ENCODE measurements at regions of chr21 and their contacts with region 1.

Region 1: GRCh38 chr21:36113647-36114428 is 21.0 kb upstream of the CBR3 start:
- DNase-seq: peak in 1 of 2 donors; percentile 87
- ATAC-seq: peak in 2 of 3 donors; percentile 41 to 56
- H3K4me3 ChIP-seq: peak overlapping the region; percentile 12
- H3K4me3 Mint-ChIP-seq: peak overlapping the region; percentile 88
- H3K27ac ChIP-seq: no peak overlapping the region
- H3K27ac Mint-ChIP-seq: peak overlapping the region; percentile 60 to 66
- H3K4me1 ChIP-seq: peaks cover 28% of the 10 kb centered on the region
- H3K4me1 Mint-ChIP-seq: peaks cover 18 to 20% of the 10 kb centered on the region in 2 donors
- H3K27me3 ChIP-seq: no peaks in the 10 kb centered on the region
- H3K27me3 Mint-ChIP-seq: peaks cover 7 to 20% of the 10 kb centered on the region in 2 donors
- CTCF ChIP-seq: no peak

Region 2: GRCh38 chr21:36060159-36060921 is 53.5 kb before region 1 on chr21 and contains the start of gene SETD4:
- intact Hi-C with region 1: loop called (anchors 1 kb)
- DNase-seq: peak; percentile 91 to 95
- ATAC-seq: peak; percentile 85 to 92 (median 87)
- H3K4me3 ChIP-seq: peak within 1 kb of the TSS; percentile 85
- H3K4me3 Mint-ChIP-seq: peak within 1 kb of the TSS; percentile 96
- H3K27ac ChIP-seq: peak within 1 kb of the TSS; percentile 72
- H3K27ac Mint-ChIP-seq: peak within 1 kb of the TSS; percentile 93 to 94
- H3K4me1 ChIP-seq: peaks cover 15% of the 10 kb centered on the region
- H3K4me1 Mint-ChIP-seq: peaks cover 9 to 24% of the 10 kb centered on the region in 2 donors
- H3K27me3 ChIP-seq: no peaks in the 10 kb centered on the region
- H3K27me3 Mint-ChIP-seq: peaks cover 0 to 4% of the 10 kb centered on the region in 2 donors
- CTCF ChIP-seq: no peak
- total RNA-seq, gene SETD4: 19.1 to 29.3 (median 22.5) TPM

Region 3: DNA sequence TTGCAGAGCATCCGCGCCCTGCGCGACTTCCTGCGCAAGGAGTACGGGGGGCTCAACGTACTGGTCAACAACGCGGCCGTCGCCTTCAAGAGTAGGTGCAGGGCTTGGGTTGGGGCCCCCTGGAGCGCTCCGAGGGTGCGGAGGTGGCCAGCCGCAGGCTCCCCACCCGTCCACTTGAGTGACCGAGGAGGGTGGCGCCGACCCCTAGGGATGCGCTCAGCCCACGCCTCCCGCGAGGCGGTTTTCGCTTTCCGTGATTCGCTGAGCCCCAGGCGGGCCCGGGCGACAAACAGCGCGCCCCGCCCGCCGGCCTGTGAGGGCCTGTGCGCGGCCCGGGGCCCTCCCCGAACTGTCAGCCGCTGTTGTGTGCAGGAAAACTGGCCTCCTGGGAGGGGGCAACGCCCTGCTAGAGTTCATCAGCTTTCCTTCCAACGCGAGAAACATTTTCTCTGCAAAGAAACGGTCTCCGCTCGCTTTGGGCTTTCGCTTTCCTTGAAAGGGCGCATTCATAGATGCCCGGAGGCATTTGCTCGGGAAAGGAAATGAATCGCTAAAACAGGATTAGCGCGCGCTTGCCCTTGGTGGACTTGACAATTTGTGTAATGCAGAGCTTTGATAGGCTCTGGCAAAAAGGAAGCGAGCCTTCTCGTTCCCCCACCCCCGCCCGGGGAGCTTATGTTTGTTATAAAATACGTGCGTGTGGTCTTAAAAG is 21.7 kb after region 1 on chr21:
- intact Hi-C with region 1: no loop called
- DNase-seq: peak; percentile 45 to 65
- ATAC-seq: peak; percentile 81 to 88 (median 84)
- H3K4me3 ChIP-seq: peak overlapping the region; percentile 63
- H3K4me3 Mint-ChIP-seq: peak overlapping the region; percentile 94
- H3K27ac ChIP-seq: peak overlapping the region; percentile 0
- H3K27ac Mint-ChIP-seq: peak overlapping the region; percentile 70 to 89
- H3K4me1 ChIP-seq: peaks cover 20% of the 10 kb centered on the region
- H3K4me1 Mint-ChIP-seq: peaks cover 10 to 23% of the 10 kb centered on the region in 2 donors
- H3K27me3 ChIP-seq: no peaks in the 10 kb centered on the region
- H3K27me3 Mint-ChIP-seq: no peaks in the 10 kb centered on the region
- CTCF ChIP-seq: no peak

Measured in natural killer cell (primary cell).